Cardiac septum (tissue), 1 donor: ENCODE measurements at regions of chr18 and their contacts with region 1.

Region 1: DNA sequence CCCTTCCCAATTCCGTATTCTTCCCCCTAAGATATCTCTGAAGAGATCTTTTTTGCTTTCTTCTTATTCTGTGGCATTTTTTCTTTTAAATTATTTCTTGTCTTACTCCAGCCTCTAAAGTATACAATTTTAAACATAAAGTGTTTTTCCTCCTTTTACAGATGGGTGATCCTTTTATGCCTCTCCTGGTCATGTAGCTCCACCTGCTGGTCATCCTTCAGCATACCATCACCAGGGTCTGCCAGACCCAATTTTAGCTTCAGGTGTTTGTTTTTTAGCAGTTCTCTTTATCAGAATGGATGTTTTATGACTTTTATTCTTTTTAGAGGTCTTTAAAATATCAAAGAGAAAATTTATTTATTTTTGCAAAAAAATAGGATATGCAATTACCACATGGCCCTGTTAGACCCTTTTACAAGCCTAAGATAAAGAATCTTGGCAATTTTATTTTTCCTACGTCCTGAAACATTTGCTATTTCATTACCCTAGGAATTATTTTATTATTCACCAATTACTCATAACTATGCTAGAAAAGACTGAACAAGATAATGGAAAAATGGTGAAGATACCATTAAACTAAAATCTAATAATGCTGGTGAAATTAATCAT is 55.5 kb downstream of the PIGN start:
- DNase-seq: no peak

Region 2: DNA sequence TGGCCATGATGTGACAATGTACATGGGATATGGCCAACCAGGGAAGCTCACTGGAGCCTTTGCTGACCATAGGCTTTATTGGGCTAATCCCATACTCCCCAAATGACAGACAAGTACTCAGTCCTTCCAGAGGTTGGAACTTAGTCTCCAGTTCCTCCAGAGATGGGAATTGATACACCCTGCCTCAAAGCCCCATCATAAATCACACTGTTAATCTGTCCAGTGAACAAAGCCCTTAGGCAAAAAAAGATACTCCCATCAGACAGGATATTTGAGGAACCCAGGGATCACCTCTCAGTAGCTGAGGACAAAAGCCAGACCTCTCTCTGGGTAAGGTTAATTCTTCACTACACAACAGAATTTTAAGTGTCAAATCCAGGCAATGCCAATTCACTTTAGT is 1045.6 kb before region 1 on chr18:
- intact Hi-C with region 1: loop called (anchors 5 kb)
- DNase-seq: no peak

Region 3: GRCh38 chr18:61551586-61551985 is 579.8 kb before region 1 on chr18:
- intact Hi-C with region 1: loop called (anchors 10 kb)
- DNase-seq: no peak

Region 4: DNA sequence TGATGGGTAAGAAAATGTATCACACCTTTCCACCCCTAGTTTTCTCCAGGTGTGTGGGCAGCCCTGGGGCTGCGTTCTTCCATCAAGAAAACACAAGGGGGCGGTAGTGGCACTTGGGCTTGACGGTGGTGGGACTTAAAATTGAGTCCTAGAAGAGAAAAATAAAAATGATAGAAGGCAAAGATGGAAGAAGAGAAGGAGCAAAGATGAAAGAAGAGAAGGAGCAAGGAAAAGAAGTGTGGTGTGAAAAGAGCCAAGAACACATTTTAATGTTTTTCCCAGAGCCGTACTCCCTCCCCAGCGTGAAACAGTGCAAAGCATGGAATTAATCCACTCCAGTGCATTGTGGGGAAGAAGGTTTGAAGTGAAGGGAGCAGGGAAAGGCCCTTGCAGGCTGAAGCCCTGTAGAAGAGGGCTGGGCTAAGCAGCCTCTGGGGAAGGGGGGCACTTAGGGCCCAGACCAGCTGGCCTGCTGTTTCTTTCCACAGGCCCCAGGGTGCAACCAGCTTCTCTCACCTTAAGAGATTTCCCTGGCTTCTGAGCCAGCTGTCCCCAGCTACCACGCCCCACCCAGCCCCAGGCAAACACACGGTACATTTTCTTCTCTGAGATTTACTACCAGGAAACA is 495.4 kb before region 1 on chr18:
- intact Hi-C with region 1: loop called (anchors 5 kb)
- DNase-seq: no peak

Region 5: DNA sequence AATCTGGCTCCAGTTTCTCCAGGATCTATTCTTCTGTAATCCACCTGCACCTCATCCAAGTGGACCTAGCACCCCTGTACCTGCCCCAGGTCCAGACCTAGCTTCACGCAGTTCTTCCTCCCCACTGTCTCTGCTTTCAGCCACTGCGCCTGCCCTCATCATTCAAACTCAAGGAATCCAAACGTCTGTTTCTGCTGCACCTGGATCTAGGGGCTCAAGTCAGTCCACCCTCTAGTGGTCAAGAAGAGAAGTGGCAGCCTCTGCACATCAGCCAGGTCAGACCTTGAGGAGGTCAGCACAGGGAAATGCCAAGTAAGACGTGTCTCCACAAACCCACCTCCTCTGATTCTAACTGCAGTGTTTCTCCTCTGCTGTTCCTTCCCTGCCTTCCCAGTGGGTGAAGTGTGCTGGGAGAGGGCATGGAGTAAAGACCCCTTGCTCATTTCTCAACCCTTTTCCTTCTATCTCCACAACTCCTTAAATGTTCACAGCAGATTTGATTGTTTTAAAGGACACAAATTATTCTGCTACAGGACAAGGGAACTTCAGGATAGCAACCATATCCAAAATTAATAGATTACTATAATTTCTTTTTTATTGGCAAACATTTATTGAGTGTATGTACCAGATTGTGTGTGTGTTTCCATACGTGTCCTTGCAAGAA is 229.9 kb before region 1 on chr18:
- intact Hi-C with region 1: loop called (anchors 5 kb)
- DNase-seq: no peak

Region 6: GRCh38 chr18:62018034-62018758 is 113.2 kb before region 1 on chr18:
- intact Hi-C with region 1: no loop called
- DNase-seq: no peak